Endothelial cell of umbilical vein (primary cell): ENCODE measurements at regions of chr12 and their contacts with region 1.

Region 1: GRCh38 chr12:56677680-56678079 is 10.4 kb downstream of the PTGES3 start:
- DNase-seq: no peak
- H3K4me3 ChIP-seq: no peak overlapping the region
- H3K27ac ChIP-seq: no peak overlapping the region
- H3K4me1 ChIP-seq: no peaks in the 10 kb centered on the region
- H3K27me3 ChIP-seq: no peaks in the 10 kb centered on the region
- CTCF ChIP-seq: no peak
- POLR2A ChIP-seq: no peak

Region 2: DNA sequence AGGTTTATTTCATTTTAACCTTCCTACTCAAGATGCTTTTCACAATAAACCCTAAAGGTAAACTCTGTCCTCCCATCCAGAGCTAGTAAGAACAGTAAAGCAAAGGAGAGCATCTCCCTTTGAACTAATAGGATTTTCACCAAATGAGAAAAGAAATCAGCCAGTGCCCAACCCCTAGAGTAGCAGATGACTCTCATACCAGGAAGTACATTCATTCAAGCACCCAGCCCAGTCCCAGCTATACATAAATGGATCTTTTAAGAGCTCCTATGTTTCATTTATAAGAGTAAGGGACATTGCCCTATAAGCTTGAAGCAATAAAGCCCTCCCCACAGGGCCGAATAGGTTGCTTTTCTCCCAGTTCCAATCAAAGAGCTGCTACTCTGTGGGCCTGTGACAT is 55.1 kb before region 1 on chr12:
- CTCF ChIA-PET with region 1: no interaction called
- POLR2A ChIA-PET with region 1: interaction called, 13 read pairs
- dilution Hi-C with region 1: no loop called
- intact Hi-C with region 1: no loop called
- DNase-seq: no peak
- H3K4me3 ChIP-seq: no peak overlapping the region
- H3K27ac ChIP-seq: no peak overlapping the region
- H3K4me1 ChIP-seq: no peaks in the 10 kb centered on the region
- H3K27me3 ChIP-seq: no peaks in the 10 kb centered on the region
- CTCF ChIP-seq: no peak
- POLR2A ChIP-seq: no peak